CD4-positive, alpha-beta T cell (primary cell): ENCODE measurements at regions of chr1 and their contacts with region 1.

Region 1: GRCh38 chr1:2044510-2045319 is 5.5 kb upstream of the PRKCZ start:
- DNase-seq: peak; percentile 61 to 90 (median 76)
- ATAC-seq: peak; percentile 94
- H3K4me3 ChIP-seq: peak overlapping the region; percentile 39
- H3K4me3 Mint-ChIP-seq: peak overlapping the region; percentile 34
- H3K27ac ChIP-seq: no peak overlapping the region
- H3K27ac Mint-ChIP-seq: no peak overlapping the region
- H3K4me1 ChIP-seq: peaks cover 30% of the 10 kb centered on the region
- H3K4me1 Mint-ChIP-seq: peaks cover 22% of the 10 kb centered on the region
- H3K27me3 ChIP-seq: peaks cover 9 to 16% of the 10 kb centered on the region in 2 experiments
- H3K27me3 Mint-ChIP-seq: peaks cover 16% of the 10 kb centered on the region
- CTCF ChIP-seq: peak; percentile 74

Region 2: DNA sequence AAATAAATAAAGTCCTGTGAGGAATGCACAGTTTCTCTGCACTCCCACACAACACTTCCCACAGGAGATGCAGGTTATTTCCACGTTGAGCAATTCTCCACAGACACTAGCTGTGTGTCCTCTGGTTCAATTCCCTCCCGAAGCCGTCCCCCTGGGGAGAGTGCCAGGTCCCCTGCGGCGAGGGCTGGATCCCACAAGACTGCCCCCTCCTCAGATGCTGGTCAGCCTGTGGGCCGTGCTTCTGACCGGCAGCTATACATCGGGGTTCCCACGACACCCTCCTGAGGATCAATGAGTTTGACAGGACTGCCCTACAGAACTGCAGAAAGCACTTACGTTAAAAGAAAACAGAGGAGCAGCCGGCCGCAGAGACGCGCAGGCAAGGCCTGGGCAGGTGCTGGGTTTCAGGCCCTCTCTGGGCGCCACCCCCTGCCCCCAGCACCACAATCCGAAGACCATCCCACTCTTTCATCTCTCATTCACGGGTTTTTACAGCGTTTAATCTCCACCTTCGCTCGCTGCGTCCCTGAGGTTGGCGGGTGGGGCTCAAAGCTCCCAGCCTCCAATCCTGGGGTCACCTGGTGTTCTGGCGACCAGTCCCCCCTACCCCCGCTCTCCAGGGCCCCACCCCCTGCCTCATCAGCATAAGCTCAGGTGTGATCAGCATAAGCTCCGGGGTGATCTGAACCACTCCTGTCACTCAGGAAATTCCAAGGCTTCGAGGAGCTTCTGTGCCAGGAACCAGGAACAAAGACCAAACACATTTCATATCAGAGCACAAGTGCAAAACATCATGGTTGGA is 361.4 kb before region 1 on chr1:
- CTCF ChIA-PET with region 1: no interaction called
- POLR2A ChIA-PET with region 1: no interaction called
- intact Hi-C with region 1: no loop called
- DNase-seq: no peak
- ATAC-seq: no peak
- H3K4me3 ChIP-seq: no peak overlapping the region
- H3K4me3 Mint-ChIP-seq: peak overlapping the region; percentile 30
- H3K27ac ChIP-seq: no peak overlapping the region
- H3K27ac Mint-ChIP-seq: no peak overlapping the region
- H3K4me1 ChIP-seq: peaks cover 28% of the 10 kb centered on the region
- H3K4me1 Mint-ChIP-seq: peaks cover 18% of the 10 kb centered on the region
- H3K27me3 ChIP-seq: no peaks in the 10 kb centered on the region
- H3K27me3 Mint-ChIP-seq: no peaks in the 10 kb centered on the region
- CTCF ChIP-seq: no peak

Region 3: DNA sequence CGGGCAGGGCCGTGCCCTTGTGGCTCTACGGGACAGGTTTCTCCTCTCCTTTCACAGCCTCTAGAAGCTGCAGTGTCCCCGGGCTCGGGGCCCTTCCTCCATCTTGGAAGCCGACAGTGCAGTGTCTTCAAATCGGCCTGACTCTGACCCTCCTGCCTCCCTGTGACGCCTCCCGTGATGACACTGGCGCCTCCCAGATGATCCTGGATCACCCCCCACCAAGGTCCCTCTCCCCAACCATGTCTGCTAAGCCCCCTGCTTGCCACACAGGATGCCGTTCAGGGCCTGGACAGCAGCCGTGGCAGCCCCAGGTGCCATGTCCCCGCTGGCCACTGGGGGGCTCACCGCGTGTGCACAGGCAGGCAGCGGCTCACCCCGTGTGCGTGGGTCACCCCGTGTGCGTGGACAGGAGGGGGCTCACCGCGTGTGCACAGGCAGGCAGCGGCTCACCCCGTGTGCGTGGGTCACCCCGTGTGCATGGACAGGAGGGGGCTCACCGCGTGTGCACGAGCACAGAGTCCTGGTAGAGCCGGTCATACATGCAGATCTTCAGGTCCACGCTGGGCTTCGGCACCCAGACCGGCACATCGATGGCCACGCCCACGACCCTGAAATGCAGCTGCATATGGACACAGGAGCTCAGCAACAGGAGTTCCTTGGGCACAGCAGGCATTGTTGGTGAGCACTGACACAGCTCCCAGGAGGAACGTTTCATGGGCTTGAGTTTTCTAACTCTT is 100.7 kb before region 1 on chr1:
- CTCF ChIA-PET with region 1: interaction called, 11 read pairs
- POLR2A ChIA-PET with region 1: interaction called, 3 read pairs
- intact Hi-C with region 1: loop called in 1 of 2 experiments (anchors 1 kb)
- DNase-seq: peak; percentile 36 to 75 (median 54)
- ATAC-seq: peak; percentile 99
- H3K4me3 ChIP-seq: no peak overlapping the region
- H3K4me3 Mint-ChIP-seq: no peak overlapping the region
- H3K27ac ChIP-seq: no peak overlapping the region
- H3K27ac Mint-ChIP-seq: no peak overlapping the region
- H3K4me1 ChIP-seq: peaks cover 10% of the 10 kb centered on the region
- H3K4me1 Mint-ChIP-seq: no peaks in the 10 kb centered on the region
- H3K27me3 ChIP-seq: no peaks in the 10 kb centered on the region
- H3K27me3 Mint-ChIP-seq: peaks cover 5% of the 10 kb centered on the region
- CTCF ChIP-seq: peak; percentile 82

Region 4: GRCh38 chr1:1959840-1960479 is 84.8 kb before region 1 on chr1:
- CTCF ChIA-PET with region 1: interaction called, 6 read pairs
- POLR2A ChIA-PET with region 1: no interaction called
- intact Hi-C with region 1: loop called in 1 of 2 experiments (anchors 1 kb)
- DNase-seq: peak; percentile 35 to 72 (median 52)
- ATAC-seq: peak; percentile 46
- H3K4me3 ChIP-seq: no peak overlapping the region
- H3K4me3 Mint-ChIP-seq: no peak overlapping the region
- H3K27ac ChIP-seq: no peak overlapping the region
- H3K27ac Mint-ChIP-seq: no peak overlapping the region
- H3K4me1 ChIP-seq: peaks cover 7% of the 10 kb centered on the region
- H3K4me1 Mint-ChIP-seq: no peaks in the 10 kb centered on the region
- H3K27me3 ChIP-seq: peaks cover 19% of the 10 kb centered on the region in 2 experiments
- H3K27me3 Mint-ChIP-seq: peaks cover 28% of the 10 kb centered on the region
- CTCF ChIP-seq: peak; percentile 35

Region 5: GRCh38 chr1:2115681-2116341 is 71.1 kb after region 1 on chr1:
- CTCF ChIA-PET with region 1: no interaction called
- POLR2A ChIA-PET with region 1: no interaction called
- intact Hi-C with region 1: no loop called
- DNase-seq: no peak
- ATAC-seq: no peak
- H3K4me3 ChIP-seq: no peak overlapping the region
- H3K4me3 Mint-ChIP-seq: no peak overlapping the region
- H3K27ac ChIP-seq: no peak overlapping the region
- H3K27ac Mint-ChIP-seq: no peak overlapping the region
- H3K4me1 ChIP-seq: peaks cover 8% of the 10 kb centered on the region
- H3K4me1 Mint-ChIP-seq: peaks cover 5% of the 10 kb centered on the region
- H3K27me3 ChIP-seq: no peaks in the 10 kb centered on the region
- H3K27me3 Mint-ChIP-seq: no peaks in the 10 kb centered on the region
- CTCF ChIP-seq: no peak